Sigmoid colon (tissue), 7 donors: ENCODE measurements at regions of chr1 and their contacts with region 1.

Region 1: DNA sequence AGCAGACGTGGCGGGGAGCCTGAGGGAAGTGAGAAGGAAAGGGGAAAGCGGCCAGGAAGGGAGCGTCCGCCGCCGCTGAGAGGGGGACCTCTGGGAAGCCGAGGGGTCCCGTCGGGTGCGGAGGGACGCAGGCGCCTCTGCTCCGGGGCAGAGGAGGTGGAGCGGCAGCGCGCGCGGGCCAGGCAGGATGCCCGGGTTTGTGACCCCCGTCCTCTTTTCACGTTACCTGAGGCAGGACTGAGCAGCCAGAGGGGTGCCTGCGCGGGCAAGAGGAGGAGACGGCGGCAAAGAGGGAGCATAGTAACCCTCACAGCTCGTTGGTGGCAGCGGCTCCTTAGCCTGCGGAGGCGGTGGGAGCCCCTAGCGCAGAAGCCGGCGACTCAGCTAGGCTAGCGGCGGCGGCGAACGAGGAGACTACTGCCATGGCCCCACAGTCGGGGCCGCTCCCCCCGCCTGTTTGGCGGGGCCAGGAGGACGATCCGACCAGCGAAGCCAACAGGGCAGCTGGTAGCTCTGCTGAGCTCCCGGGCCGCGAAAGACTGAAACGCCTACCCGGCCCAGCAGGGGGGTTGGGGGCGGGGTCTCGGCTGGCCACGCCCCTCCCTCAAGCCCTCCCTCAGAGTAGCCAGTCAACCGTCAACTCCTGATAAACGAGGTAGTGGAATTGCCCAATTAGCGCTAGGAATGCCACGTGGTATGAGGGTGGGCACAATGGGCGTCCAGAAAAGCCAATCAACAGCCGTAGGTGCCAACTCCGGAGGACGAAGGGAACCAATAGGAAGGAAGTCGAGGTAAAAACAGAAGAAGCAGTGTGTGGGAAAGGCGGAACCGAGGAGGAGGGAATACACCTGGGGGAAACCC is at the start of gene TESK2:
- DNase-seq: peak; percentile 99
- H3K4me3 ChIP-seq: peak within 1 kb of the TSS; percentile 84 to 95 (median 90)
- H3K27ac ChIP-seq: peak within 1 kb of the TSS; percentile 85 to 89 (median 87)
- H3K4me1 ChIP-seq: peaks cover 0 to 13% (median 10%) of the 10 kb centered on the region in 4 donors
- H3K27me3 ChIP-seq: no peaks in the 10 kb centered on the region
- CTCF ChIP-seq: peak in 2 of 4 experiments; percentile 15 to 29
- EP300 ChIP-seq: no peak
- POLR2A ChIP-seq: peak; percentile 55 to 92
- total RNA-seq, gene TESK2: 4.3 to 7.8 (median 7.0) TPM

Region 2: GRCh38 chr1:44799770-44800584 is 690.9 kb before region 1 on chr1 and contains the start of gene PLK3:
- intact Hi-C with region 1: loop called (anchors 10 kb)
- DNase-seq: peak; percentile 99
- H3K4me3 ChIP-seq: peak within 1 kb of the TSS; percentile 37 to 87 (median 74)
- H3K27ac ChIP-seq: peak within 1 kb of the TSS; percentile 90 to 95 (median 92)
- H3K4me1 ChIP-seq: peaks cover 5 to 41% (median 19%) of the 10 kb centered on the region in 4 donors
- H3K27me3 ChIP-seq: no peaks in the 10 kb centered on the region
- CTCF ChIP-seq: peak; percentile 75 to 90 (median 85)
- EP300 ChIP-seq: no peak
- POLR2A ChIP-seq: peak; percentile 30 to 83
- total RNA-seq, gene PLK3: 8.2 to 28.1 (median 11.0) TPM

Region 3: DNA sequence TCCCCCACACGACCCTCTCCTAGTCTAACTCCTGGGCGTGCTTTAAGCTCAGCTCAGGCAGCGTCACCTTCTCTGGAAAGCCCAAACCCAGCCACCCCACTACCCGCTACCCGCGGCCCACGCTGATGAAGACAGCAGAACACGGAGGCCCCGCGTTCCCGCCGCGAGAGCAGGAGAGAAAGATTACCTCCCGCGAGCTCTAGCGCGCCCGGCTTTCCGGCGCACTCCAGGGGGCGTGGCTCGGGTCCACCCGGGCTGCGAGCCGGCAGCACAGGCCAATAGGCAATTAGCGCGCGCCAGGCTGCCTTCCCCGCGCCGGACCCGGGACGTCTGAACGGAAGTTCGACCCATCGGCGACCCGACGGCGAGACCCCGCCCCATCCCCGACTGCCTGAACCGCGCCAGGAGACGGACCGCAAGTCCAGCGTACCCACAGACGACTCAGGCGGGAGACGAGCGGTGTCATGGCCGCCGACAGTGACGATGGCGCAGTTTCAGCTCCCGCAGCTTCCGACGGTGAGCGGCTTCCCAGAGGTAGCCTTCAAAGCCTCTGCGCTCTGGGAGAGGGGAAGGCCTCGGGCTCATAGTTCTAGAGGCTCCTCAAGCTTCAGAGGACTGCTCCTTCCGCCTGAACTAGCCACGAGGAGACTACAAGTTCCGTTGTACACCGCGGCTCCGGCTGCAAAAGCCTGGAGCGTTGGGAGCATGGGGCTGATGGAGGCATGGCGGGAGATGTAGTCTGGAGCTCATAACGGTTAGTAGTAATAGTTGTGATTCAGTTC is 150.9 kb before region 1 on chr1 and contains the starts of genes MUTYH and TOE1:
- intact Hi-C with region 1: loop called (anchors 5 kb)
- DNase-seq: peak; percentile 96
- H3K4me3 ChIP-seq: peak within 1 kb of the TSS; percentile 67 to 88 (median 76)
- H3K27ac ChIP-seq: peak within 1 kb of the TSS; percentile 92 to 98 (median 96)
- H3K4me1 ChIP-seq: peaks cover 0 to 30% (median 28%) of the 10 kb centered on the region in 4 donors
- H3K27me3 ChIP-seq: no peaks in the 10 kb centered on the region
- CTCF ChIP-seq: no peak
- EP300 ChIP-seq: no peak
- POLR2A ChIP-seq: peak; percentile 58 to 60
- total RNA-seq, gene MUTYH: 15.7 to 22.8 (median 19.2) TPM
- total RNA-seq, gene TOE1: 7.1 to 10.5 (median 7.3) TPM

Region 4: DNA sequence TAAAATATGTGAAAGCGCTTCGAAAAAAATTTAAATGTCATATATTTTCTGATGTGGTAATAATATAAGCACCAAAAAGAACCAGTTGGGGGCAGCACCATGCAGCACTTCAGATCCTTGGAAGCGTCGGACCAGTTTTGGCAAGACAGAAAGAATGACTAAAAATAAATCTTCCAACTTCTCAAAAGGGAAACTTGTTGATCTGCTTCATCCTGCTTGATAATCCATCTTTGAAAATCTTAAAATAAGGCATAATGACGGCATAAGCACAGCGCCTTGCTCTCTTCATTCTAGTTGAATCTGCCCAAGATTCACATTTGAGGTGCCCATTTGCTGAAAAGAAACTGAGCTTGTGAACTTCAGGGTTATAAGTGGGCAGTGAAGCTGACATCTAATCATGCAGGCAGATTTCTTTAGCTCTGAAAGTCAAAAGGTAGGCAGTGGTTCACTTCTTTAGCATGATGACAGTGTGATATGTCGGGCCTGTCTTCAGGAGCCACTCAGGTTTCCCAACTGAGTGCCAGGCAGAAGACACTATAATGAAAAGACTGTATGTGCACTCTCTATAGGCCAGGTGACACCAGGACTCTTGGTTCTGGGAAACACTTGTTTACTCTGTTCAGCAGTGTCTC is 130.9 kb before region 1 on chr1:
- intact Hi-C with region 1: loop called (anchors 1 kb)
- DNase-seq: peak; percentile 81
- H3K4me3 ChIP-seq: no peak overlapping the region
- H3K27ac ChIP-seq: peak overlapping the region; percentile 67 to 76 (median 72)
- H3K4me1 ChIP-seq: peaks cover 0 to 24% (median 14%) of the 10 kb centered on the region in 4 donors
- H3K27me3 ChIP-seq: no peaks in the 10 kb centered on the region
- CTCF ChIP-seq: peak; percentile 30 to 71 (median 54)
- EP300 ChIP-seq: no peak
- POLR2A ChIP-seq: no peak